ENCODE measurements at regions of chr5 and their contacts with region 1.

Region 1: GRCh38 chr5:94807985-94808384 is 189.5 kb downstream of the SLF1 start:
- DNase-seq: no peak
- ATAC-seq: no peak
- H3K4me3 ChIP-seq: no peak overlapping the region
- H3K4me3 Mint-ChIP-seq: no peak overlapping the region
- H3K27ac ChIP-seq: no peak overlapping the region
- H3K27ac Mint-ChIP-seq: no peak overlapping the region
- H3K4me1 ChIP-seq: no peaks in the 10 kb centered on the region
- H3K4me1 Mint-ChIP-seq: no peaks in the 10 kb centered on the region
- H3K27me3 ChIP-seq: peaks cover 0 to 3% of the 10 kb centered on the region in 2 experiments
- H3K27me3 Mint-ChIP-seq: no peaks in the 10 kb centered on the region
- CTCF ChIP-seq: no peak

Region 2: DNA sequence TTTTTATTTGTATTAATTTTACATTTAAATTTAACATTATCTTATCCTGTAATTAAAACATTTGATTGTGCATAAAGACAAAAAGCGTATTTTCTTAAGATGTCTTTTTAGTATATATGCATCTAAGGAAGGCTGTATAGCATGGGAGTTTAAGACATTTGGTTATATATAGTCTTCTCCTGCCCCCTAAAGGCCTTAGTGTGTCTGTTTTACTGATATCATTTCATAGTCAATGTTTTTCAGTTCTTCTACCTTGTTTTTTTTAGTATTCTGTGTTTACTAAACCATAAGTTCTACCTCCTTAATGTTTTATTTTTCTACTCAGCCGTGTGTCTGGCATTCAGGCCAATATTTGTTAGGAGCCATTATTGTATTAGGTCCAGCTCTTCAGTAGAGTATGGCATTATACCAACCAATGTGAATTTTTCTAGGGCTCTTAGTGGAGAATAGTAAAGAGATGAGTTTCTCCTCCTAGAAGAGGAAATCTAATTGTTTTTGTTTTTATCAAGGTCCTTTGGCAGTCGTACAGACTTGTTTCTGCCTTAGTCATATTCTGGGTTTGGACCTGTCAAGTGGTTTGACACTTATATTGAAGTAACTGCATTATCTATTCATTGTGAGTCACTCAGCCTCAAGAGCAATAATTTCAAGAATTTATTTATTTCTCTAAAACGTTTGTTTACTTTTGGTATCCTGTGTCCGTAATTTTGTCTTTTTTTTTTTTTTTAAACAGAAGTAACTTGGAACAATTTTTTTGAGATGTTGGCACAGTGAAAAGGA is 114.8 kb before region 1 on chr5:
- CTCF ChIA-PET with region 1: no interaction called
- POLR2A ChIA-PET with region 1: no interaction called
- intact Hi-C with region 1: loop called in 1 of 2 experiments (anchors 5 kb)
- DNase-seq: peak in 2 of 9 experiments; percentile 56 to 69
- ATAC-seq: peak; percentile 49
- H3K4me3 ChIP-seq: no peak overlapping the region
- H3K4me3 Mint-ChIP-seq: no peak overlapping the region
- H3K27ac ChIP-seq: peak overlapping the region in 1 of 2 experiments; percentile 29
- H3K27ac Mint-ChIP-seq: no peak overlapping the region
- H3K4me1 ChIP-seq: no peaks in the 10 kb centered on the region
- H3K4me1 Mint-ChIP-seq: no peaks in the 10 kb centered on the region
- H3K27me3 ChIP-seq: no peaks in the 10 kb centered on the region
- H3K27me3 Mint-ChIP-seq: no peaks in the 10 kb centered on the region
- CTCF ChIP-seq: peak; percentile 53

Region 3: DNA sequence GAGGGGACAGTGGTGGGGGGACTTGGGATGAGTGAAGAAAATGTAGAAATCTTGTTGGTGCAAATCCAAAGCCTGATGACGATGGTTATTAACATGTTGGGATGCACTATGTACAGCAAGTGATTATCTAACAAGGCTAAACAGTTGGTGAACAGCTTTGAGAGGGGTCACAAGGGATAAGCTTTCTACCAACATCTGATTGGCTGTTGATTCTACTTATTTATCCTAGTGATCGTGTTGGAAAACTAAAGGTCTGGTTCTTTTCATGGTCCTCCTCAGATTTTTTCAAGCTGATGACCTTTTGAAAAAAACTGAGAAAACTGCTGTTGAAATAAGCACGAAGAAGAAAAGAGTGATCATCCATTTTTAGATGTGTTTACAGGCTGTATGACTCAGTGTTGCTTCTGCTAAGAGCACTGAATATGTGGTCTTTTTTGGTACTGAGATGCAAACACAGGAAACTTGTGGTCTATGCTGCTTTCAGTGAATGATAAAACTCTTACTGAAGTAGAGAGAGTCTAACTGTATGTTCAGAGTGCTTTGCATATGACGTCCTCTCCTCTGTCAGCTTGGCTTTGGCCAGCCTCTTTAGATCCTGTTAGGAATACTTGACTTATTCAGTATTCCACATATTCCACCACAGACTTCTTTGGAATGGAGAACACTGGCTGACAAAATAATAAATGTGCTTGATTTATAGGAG is 14.7 kb before region 1 on chr5:
- CTCF ChIA-PET with region 1: no interaction called
- POLR2A ChIA-PET with region 1: no interaction called
- intact Hi-C with region 1: loop called in 1 of 2 experiments (anchors 2 kb)
- DNase-seq: peak in 4 of 9 experiments; percentile 4 to 81 (median 40)
- ATAC-seq: peak; percentile 92
- H3K4me3 ChIP-seq: no peak overlapping the region
- H3K4me3 Mint-ChIP-seq: peak overlapping the region; percentile 44
- H3K27ac ChIP-seq: peak overlapping the region; percentile 20 to 80
- H3K27ac Mint-ChIP-seq: peak overlapping the region; percentile 92
- H3K4me1 ChIP-seq: peaks cover 30% of the 10 kb centered on the region
- H3K4me1 Mint-ChIP-seq: peaks cover 37% of the 10 kb centered on the region
- H3K27me3 ChIP-seq: no peaks in the 10 kb centered on the region
- H3K27me3 Mint-ChIP-seq: no peaks in the 10 kb centered on the region
- CTCF ChIP-seq: no peak

Region 4: GRCh38 chr5:95007901-95008597 is 200.1 kb after region 1 on chr5:
- CTCF ChIA-PET with region 1: no interaction called
- POLR2A ChIA-PET with region 1: no interaction called
- intact Hi-C with region 1: no loop called
- DNase-seq: no peak
- ATAC-seq: no peak
- H3K4me3 ChIP-seq: no peak overlapping the region
- H3K4me3 Mint-ChIP-seq: no peak overlapping the region
- H3K27ac ChIP-seq: no peak overlapping the region
- H3K27ac Mint-ChIP-seq: no peak overlapping the region
- H3K4me1 ChIP-seq: no peaks in the 10 kb centered on the region
- H3K4me1 Mint-ChIP-seq: no peaks in the 10 kb centered on the region
- H3K27me3 ChIP-seq: no peaks in the 10 kb centered on the region
- H3K27me3 Mint-ChIP-seq: no peaks in the 10 kb centered on the region
- CTCF ChIP-seq: no peak

Measured in CD8-positive, alpha-beta T cell (primary cell).